ENCODE measurements at regions of chr15 and their contacts with region 1.

Region 1: GRCh38 chr15:88610701-88611231 is 10.4 kb upstream of the AEN start:
- DNase-seq: no peak

Region 2: GRCh38 chr15:88476635-88477060 is 134.1 kb before region 1 on chr15:
- in situ Hi-C with region 1: loop called (anchors 10 kb)
- DNase-seq: peak; percentile 88

Measured in G401 (cell line).